ENCODE measurements at regions of chr11 and their contacts with region 1.

Region 1: GRCh38 chr11:18012863-18013781 is at the start of gene SERGEF:
- DNase-seq: peak; percentile 74 to 96
- H3K4me3 ChIP-seq: peak within 1 kb of the TSS; percentile 76 to 97
- H3K27ac ChIP-seq: peak within 1 kb of the TSS; percentile 93 to 98
- H3K4me1 ChIP-seq: no peaks in the 10 kb centered on the region
- H3K27me3 ChIP-seq: no peaks in the 10 kb centered on the region
- CTCF ChIP-seq: peak in 2 of 3 experiments; percentile 9 to 20
- total RNA-seq, gene SERGEF: 13.6 TPM

Region 2: GRCh38 chr11:17354601-17354991 is 658.5 kb before region 1 on chr11:
- intact Hi-C with region 1: no loop called
- DNase-seq: peak in 1 of 2 donors; percentile 86
- H3K4me3 ChIP-seq: peak overlapping the region in 1 of 2 donors; percentile 98
- H3K27ac ChIP-seq: no peak overlapping the region
- H3K4me1 ChIP-seq: peaks cover 0 to 7% of the 10 kb centered on the region in 2 donors
- H3K27me3 ChIP-seq: no peaks in the 10 kb centered on the region
- CTCF ChIP-seq: peak; percentile 39 to 57 (median 53)

Region 3: DNA sequence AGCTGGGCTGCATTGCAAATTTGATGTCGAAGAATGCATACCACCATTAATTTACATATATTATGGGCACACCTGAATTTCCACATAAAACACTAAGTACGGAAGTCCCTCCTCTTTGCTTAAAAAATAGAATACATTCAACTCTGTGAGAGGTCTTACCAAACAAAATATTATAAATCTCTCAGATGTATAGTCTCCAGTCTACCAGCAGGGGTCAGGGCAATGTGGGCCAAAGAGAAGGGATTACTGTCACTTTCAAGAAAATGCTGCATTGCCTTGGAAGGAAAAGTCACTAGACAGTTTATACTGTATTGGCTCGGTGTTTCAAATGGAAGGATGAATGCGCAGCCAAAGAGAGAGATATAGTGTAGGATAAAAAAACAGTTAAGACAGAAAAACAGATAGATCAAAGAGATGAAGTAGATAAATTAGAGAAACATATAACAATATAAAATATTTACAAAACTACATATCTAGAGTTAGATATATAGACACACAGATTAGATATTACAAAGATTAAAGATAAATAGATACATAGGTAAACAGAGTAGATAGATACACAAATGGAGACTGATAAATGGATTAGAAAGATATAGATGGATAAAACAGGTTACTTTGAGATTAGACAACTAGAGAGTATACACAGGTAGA is 21.2 kb before region 1 on chr11:
- intact Hi-C with region 1: loop called (anchors 2 kb)
- DNase-seq: no peak
- H3K4me3 ChIP-seq: no peak overlapping the region
- H3K27ac ChIP-seq: no peak overlapping the region
- H3K4me1 ChIP-seq: peaks cover 0 to under 1% of the 10 kb centered on the region in 2 donors
- H3K27me3 ChIP-seq: no peaks in the 10 kb centered on the region
- CTCF ChIP-seq: peak; percentile 55 to 78 (median 76)

Region 4: DNA sequence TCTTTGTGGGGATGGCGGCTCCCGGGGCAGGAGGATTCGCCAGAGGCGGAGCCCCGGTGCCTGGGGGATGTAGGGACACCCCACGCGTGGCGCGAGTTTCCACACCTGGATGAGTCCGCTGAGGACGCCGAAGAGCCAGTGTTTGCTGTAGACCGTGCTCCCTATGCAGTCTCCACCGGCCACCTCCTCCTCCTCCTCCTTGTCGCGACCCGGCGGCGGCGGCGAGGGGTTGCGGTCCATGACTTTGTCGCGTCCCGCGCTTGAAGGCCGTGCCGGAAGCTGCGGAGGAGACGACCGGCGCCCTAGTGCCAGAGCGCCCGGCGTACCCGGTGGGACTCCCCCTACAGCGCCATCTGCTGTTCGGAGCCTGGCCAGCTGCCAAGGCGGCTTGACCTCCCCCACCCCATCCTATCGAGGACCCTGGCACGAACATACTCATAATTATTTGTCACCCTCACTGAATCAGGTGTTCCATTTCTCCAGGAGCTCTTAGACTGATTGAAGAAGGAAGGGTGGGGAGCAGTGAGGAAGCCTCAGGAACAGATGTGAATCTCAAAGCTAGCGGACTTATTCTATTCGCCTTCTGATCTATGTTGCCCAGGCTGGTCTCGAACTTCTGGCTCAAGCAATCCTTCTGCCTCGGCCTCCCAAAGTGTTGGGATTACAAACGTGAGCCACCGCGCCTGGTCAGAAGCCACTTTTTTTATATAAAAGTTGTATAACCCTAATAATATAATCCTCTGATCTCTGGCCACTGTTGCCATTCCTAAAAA is 92.9 kb after region 1 on chr11 and contains the start of gene SAAL1:
- intact Hi-C with region 1: loop called (anchors 1 kb)
- DNase-seq: peak; percentile 18 to 90
- H3K4me3 ChIP-seq: peak within 1 kb of the TSS; percentile 72 to 92
- H3K27ac ChIP-seq: peak within 1 kb of the TSS; percentile 42 to 54
- H3K4me1 ChIP-seq: peaks cover 0 to 5% of the 10 kb centered on the region in 2 donors
- H3K27me3 ChIP-seq: no peaks in the 10 kb centered on the region
- CTCF ChIP-seq: peak; percentile 57 to 89 (median 70)
- total RNA-seq, gene SAAL1: 29.1 TPM

Region 5: GRCh38 chr11:18383388-18384156 is 370.4 kb after region 1 on chr11:
- intact Hi-C with region 1: loop called (anchors 5 kb)
- DNase-seq: peak; percentile 88 to 98
- H3K4me3 ChIP-seq: peak overlapping the region in 1 of 2 donors; percentile 30
- H3K27ac ChIP-seq: peak overlapping the region; percentile 95 to 96
- H3K4me1 ChIP-seq: peaks cover 15 to 28% of the 10 kb centered on the region in 2 donors
- H3K27me3 ChIP-seq: no peaks in the 10 kb centered on the region
- CTCF ChIP-seq: no peak

Region 6: GRCh38 chr11:18721561-18722292 is 708.6 kb after region 1 on chr11:
- intact Hi-C with region 1: loop called (anchors 10 kb)
- DNase-seq: no peak
- H3K4me3 ChIP-seq: peak overlapping the region; percentile 61 to 72
- H3K27ac ChIP-seq: peak overlapping the region; percentile 75 to 81
- H3K4me1 ChIP-seq: peaks cover 3 to 4% of the 10 kb centered on the region in 2 donors
- H3K27me3 ChIP-seq: no peaks in the 10 kb centered on the region
- CTCF ChIP-seq: peak; percentile 56 to 83 (median 69)